PC-9 (cell line): ENCODE measurements at regions of chr19 and their contacts with region 1.

Region 1: DNA sequence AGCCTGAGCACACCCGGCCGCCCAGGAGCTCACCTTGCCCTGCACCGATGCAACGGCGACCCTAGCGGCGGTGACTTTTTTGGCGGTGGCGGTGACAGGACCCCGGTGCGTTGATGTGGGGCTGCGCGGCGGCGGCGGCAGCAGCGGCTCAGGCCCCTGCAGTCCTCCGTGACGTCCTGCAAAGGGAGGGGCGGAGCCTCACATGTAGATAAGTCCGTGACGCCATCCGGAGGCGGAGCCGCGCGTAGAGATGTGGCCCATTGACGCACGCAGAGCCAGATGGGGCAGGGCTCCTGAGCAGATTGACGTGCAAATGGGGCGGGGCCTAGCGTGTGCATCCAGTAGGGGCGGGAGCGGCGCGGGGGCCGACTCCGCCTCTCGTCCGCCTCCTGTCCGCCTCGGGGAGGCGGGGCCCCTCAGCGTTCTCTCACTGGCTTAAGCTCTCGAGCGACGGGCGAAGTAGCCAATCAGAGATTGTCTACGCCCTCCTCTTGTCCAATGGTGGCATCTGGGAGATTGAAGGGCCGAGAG is at the start of gene RAB3A:
- DNase-seq: peak; percentile 99 to 100
- H3K4me3 ChIP-seq: peak within 1 kb of the TSS; percentile 73
- H3K27ac ChIP-seq: peak within 1 kb of the TSS; percentile 46
- H3K4me1 ChIP-seq: peaks cover 13% of the 10 kb centered on the region
- H3K27me3 ChIP-seq: no peaks in the 10 kb centered on the region
- CTCF ChIP-seq: no peak
- total RNA-seq, gene RAB3A: 4.0 and 4.1 TPM in 2 replicates

Region 2: DNA sequence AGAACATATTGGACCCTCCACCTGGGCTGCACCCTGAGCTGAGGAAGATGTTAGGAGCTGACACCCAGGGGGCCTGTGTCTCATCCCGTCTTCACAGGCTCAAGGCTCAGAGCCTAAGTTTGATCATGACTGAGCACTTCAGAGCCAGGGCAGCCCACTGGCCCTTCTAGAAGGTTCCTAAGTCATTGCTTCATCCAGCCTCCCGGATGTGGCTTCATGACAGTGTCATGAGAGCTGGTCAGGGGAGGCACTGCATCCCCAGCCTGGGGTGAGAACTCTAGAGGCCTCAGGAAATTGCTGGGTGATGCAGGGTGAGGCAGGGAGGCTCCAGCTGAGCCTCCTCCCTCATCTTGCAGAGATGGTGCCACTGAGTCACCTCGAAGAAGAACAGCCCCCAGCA is 75.9 kb before region 1 on chr19:
- CTCF ChIA-PET with region 1: no interaction called
- POLR2A ChIA-PET with region 1: no interaction called
- intact Hi-C with region 1: no loop called
- DNase-seq: no peak
- H3K4me3 ChIP-seq: no peak overlapping the region
- H3K27ac ChIP-seq: no peak overlapping the region
- H3K4me1 ChIP-seq: no peaks in the 10 kb centered on the region
- H3K27me3 ChIP-seq: no peaks in the 10 kb centered on the region
- CTCF ChIP-seq: no peak

Region 3: DNA sequence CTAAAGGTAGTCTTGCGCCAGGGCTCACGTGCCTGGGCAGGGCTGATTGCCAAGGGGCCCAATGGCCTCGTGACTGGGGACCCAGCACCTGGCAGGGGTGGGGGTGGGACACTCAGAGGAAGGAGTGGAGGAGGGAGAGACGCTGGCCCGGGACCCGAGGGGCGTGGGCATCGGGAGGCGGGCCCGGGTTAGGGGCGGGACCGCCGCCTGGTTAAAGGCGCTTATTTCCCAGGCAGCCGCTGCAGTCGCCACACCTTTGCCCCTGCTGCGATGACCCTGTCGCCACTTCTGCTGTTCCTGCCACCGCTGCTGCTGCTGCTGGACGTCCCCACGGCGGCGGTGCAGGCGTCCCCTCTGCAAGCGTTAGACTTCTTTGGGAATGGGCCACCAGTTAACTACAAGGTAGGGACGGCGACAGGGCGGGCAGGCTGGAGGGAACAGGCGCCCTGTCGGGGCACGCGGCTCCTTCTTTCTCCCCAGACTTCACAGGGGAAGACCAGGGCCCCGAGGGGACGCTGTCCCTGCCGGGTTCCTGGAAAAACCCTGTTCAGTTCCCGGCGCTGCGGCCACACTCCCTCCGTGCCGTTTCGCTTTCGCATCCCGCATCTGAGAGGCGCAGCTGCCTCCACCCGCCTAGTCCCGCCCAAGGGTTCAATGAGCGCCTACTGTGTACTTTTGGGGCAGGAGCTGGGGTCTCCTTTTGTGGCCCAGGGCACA is 30.2 kb before region 1 on chr19 and contains the start of gene IFI30:
- CTCF ChIA-PET with region 1: interaction called, 12 read pairs
- POLR2A ChIA-PET with region 1: no interaction called
- intact Hi-C with region 1: no loop called
- DNase-seq: peak; percentile 63 to 84
- H3K4me3 ChIP-seq: peak within 1 kb of the TSS; percentile 66
- H3K27ac ChIP-seq: peak within 1 kb of the TSS; percentile 11; the same call in 1 of the 2 replicates
- H3K4me1 ChIP-seq: peaks cover 15% of the 10 kb centered on the region
- H3K27me3 ChIP-seq: no peaks in the 10 kb centered on the region
- CTCF ChIP-seq: no peak
- total RNA-seq, gene IFI30: 26.1 and 35.8 TPM in 2 replicates

Region 4: DNA sequence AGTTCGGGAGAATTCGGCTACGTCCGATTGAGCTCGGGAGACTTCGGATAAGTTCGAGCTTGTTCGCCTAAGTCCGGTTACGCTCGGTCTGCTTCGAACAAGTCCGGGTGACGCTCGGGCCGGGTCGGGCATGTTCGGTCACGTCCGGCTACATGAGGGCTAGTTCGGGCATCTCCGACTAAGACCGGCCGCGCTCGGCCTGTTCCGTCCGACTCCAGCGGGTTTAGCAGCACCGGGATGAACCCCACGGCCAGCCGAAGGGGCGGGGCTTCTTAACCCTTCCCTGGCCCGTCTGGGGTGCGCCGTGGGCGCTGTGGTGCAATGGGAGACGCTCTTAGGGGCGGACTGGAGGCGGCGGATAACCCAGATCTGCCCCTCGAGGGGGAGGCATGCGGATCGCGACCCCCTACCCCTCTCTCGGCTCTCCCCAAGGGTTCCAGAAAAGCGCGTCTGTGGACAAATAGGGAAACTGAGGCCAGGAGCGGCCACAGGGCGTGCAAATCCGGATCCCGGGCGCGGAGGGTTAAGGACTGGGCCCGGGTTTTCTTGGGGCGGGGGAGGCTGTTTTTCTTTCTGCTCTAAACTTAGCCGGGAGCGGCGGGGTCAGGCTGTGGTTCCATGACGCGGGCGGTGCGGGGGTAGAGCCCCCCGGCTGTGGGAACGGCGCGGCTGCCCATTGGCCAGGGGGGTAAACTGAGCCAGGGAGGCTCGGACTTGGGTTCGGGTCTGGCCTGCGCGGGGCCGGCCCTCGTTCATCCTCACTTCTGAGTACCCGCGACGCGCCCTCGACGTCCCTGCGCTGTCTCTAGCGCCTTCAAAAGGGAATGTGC is 20.8 kb after region 1 on chr19:
- CTCF ChIA-PET with region 1: interaction called, 19 read pairs
- POLR2A ChIA-PET with region 1: interaction called, 3 read pairs
- intact Hi-C with region 1: no loop called
- DNase-seq: peak; percentile 97 to 98
- H3K4me3 ChIP-seq: peak overlapping the region; percentile 63
- H3K27ac ChIP-seq: no peak overlapping the region
- H3K4me1 ChIP-seq: 0 out of 2 replicates have a peak, but pooled peaks cover 3% of the 10 kb centered on the region
- H3K27me3 ChIP-seq: no peaks in the 10 kb centered on the region
- CTCF ChIP-seq: no peak

Region 5: DNA sequence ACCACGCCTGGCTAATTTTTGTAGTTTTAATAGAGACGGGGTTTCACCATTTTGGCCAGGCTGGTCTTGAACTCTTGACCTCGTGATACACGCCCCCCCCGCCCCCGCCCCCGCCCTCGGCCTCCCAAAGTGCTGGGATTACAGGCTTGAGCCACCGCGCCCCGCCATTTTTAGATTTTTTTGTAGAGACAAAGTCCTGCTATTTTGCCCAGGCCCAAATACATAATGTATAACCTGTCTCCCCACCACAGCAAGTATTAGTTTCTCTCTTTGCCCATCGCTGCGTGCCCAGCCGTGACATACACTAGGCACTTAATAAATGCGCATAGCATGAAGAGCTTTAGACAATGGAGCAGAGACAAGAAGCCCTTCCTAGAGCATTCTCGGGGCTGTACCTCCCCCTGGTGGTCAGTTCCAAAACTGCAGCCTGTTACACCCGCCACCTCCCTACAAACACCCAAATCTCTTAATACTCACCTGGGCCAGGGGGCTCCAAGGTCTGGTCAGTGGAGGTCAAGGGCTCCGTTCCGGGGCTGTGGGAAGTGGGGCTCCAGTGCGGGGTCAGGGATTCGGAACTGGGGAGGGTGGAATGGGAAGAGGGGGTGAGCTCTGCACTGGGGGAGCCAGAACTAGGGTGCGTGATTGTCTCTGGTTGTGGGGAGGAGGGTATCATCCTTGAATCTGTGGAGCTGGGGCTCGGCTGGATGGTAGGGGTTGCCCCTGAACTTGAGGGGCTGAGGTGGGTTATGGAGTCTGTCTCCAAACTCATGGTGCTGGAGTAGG is 47.9 kb after region 1 on chr19:
- CTCF ChIA-PET with region 1: interaction called, 11 read pairs
- POLR2A ChIA-PET with region 1: no interaction called
- intact Hi-C with region 1: loop called (anchors 1 kb)
- DNase-seq: peak; percentile 64 to 70
- H3K4me3 ChIP-seq: no peak overlapping the region
- H3K27ac ChIP-seq: no peak overlapping the region
- H3K4me1 ChIP-seq: peaks cover 39% of the 10 kb centered on the region
- H3K27me3 ChIP-seq: no peaks in the 10 kb centered on the region
- CTCF ChIP-seq: peak; percentile 100

Region 6: DNA sequence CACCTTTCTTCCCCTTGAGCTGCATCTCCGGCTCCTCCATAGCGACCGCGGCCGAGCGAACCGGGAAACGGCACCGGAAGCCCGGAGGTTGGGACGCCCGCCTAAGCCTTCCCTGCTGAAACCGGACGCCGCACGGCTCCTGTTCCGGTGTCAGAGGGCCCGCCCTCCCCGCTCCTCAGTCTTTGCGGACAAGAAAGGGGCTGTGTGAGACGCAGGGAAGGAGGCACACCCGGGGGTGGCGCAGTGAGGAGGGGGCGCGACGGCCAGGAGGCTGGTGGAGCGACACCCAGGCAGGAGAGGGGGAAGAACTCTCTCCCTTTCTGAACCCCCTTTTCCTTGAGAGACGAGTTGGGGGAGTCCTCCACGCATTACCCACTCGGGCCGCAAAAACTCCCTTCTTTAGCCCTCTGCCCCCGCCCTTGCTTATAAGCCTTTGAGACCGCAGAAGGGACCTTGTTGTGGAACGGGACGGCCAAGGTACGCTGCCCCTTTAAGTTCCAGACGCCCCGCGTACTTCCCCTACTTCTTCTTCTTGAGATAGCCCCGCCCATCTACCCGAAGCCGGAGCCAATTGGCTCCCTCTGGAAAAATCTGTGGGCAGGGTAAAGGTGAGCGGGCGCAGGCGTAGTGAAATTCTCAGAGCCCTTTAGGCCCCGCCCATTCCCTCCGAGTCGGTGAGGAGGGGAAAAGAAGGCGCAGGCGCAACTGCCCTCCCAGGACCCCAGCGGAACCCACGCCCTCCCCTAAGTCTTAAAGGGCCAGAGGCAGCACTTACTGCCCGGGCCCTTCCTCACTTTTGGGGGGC is 988.4 kb after region 1 on chr19 and contains the starts of genes BORCS8 and RFXANK:
- CTCF ChIA-PET with region 1: no interaction called
- POLR2A ChIA-PET with region 1: no interaction called
- intact Hi-C with region 1: no loop called
- DNase-seq: peak; percentile 98 to 99
- H3K4me3 ChIP-seq: peak within 1 kb of the TSS; percentile 84
- H3K27ac ChIP-seq: peak within 1 kb of the TSS; percentile 85
- H3K4me1 ChIP-seq: peaks cover 22% of the 10 kb centered on the region
- H3K27me3 ChIP-seq: no peaks in the 10 kb centered on the region
- CTCF ChIP-seq: no peak
- total RNA-seq, gene BORCS8: 23.1 and 24.9 TPM in 2 replicates
- total RNA-seq, gene RFXANK: 132 and 161 TPM in 2 replicates